ENCODE measurements at regions of chr1 and their contacts with region 1.

Region 1: GRCh38 chr1:151106894-151107293 is 36.3 kb downstream of the GABPB2 start:
- DNase-seq: no peak
- H3K4me3 ChIP-seq: no peak overlapping the region
- H3K27ac ChIP-seq: no peak overlapping the region
- H3K4me1 ChIP-seq: no peaks in the 10 kb centered on the region
- H3K27me3 ChIP-seq: no peaks in the 10 kb centered on the region
- CTCF ChIP-seq: no peak
- EP300 ChIP-seq: no peak
- POLR2A ChIP-seq: no peak
- RAD21 ChIP-seq: no peak

Region 2: GRCh38 chr1:150841626-150842025 is 265.3 kb before region 1 on chr1:
- CTCF ChIA-PET with region 1: no interaction called
- POLR2A ChIA-PET with region 1: no interaction called
- DNase-seq: no peak
- H3K4me3 ChIP-seq: no peak overlapping the region
- H3K27ac ChIP-seq: no peak overlapping the region
- H3K4me1 ChIP-seq: no peaks in the 10 kb centered on the region
- H3K27me3 ChIP-seq: no peaks in the 10 kb centered on the region
- CTCF ChIP-seq: no peak
- EP300 ChIP-seq: no peak
- POLR2A ChIP-seq: no peak
- RAD21 ChIP-seq: no peak

Region 3: DNA sequence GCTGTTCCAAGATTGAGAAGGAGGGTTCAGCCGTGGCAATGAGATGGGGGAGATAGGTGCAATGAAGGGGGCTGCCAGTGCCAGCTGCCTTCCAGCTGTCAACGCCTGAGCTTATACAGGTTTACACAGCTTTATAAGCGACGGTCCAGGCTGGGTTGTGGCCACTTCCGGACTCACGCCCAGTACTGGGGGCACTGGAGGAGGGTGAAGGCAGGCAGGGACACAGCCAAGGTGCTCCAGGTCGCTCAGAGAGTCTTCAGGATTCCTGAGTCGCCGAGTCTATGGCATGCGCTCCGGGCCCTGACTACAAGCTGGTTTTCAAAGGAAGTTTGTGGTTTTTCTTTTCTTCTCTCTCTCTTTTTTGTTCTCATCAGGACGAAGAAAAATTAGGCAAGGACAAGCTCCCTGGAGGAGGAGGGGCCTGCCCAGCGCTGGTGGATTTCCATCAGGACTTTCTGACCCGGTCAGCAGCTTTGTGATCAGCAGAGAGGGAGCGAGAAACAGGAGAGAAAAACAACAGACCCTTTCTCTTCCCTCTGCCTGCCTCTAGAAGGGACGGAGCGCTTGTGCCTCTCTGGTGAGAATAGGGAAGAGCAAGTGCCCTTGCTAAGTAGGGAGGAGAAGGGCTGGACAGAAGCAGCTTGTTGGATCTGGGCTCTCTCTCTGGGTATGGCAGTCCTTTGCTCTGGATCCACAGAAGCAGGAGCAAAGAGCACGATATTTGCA is 100.4 kb before region 1 on chr1 and contains the start of gene MINDY1:
- CTCF ChIA-PET with region 1: no interaction called
- POLR2A ChIA-PET with region 1: no interaction called
- DNase-seq: peak; percentile 33 to 67
- H3K4me3 ChIP-seq: peak within 1 kb of the TSS; percentile 6 to 94 (median 41); a peak in 7 of 8 replicates
- H3K27ac ChIP-seq: peak within 1 kb of the TSS; percentile 53
- H3K4me1 ChIP-seq: peaks cover 9 to 12% (median 9%) of the 10 kb centered on the region in 4 experiments; a peak in 6 of 7 replicates
- H3K27me3 ChIP-seq: no peaks in the 10 kb centered on the region
- CTCF ChIP-seq: peak; percentile 53 to 70 (median 62)
- EP300 ChIP-seq: no peak
- POLR2A ChIP-seq: peak; percentile 43 to 84
- RAD21 ChIP-seq: peak; percentile 59 to 66
- total RNA-seq, gene MINDY1: 10.6 and 11.4 TPM in 2 replicates

Region 4: GRCh38 chr1:151124763-151125403 is 18.0 kb after region 1 on chr1:
- CTCF ChIA-PET with region 1: interaction called, 21 read pairs
- POLR2A ChIA-PET with region 1: interaction called, 3 read pairs
- DNase-seq: no peak
- H3K4me3 ChIP-seq: no peak overlapping the region
- H3K27ac ChIP-seq: no peak overlapping the region
- H3K4me1 ChIP-seq: peaks cover 0 to 6% (median under 1%) of the 10 kb centered on the region in 4 experiments; a peak in 3 of 7 replicates
- H3K27me3 ChIP-seq: no peaks in the 10 kb centered on the region
- CTCF ChIP-seq: no peak
- EP300 ChIP-seq: no peak
- POLR2A ChIP-seq: no peak
- RAD21 ChIP-seq: no peak

Region 5: DNA sequence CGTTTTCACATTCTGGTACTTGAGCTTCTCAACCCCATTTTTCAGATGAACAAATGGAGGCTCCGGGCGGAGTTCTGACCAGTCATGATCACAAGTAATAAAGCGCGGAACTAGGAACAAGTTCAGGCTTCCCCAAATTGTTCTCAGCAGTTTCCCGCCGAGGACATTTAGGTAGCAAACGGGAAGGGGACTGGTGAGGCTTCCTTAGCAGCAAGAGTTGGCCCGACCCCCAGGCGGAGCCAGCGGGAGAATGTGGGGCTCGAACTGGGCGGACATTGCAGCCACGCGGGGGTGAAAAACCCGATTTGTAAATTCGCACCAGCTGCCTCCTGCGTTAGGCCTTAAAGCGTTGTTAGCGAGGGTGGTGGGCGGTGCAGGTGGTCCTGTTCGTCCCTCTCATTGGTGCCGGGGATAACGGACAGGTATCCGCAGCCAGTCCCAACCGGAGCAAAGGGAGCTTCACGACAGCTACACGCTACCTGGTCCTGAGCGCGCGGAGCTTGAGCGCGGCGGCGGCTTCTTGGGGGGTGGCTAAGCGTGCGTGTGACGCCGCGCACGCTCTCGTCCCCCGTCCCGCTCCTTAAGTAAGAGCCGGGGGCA is 24.2 kb after region 1 on chr1:
- CTCF ChIA-PET with region 1: interaction called, 27 read pairs
- POLR2A ChIA-PET with region 1: interaction called, 3 read pairs
- DNase-seq: peak; percentile 87 to 91
- H3K4me3 ChIP-seq: peak overlapping the region; percentile 37 to 64 (median 45); a peak in 7 of 8 replicates
- H3K27ac ChIP-seq: peak overlapping the region; percentile 42; the same call in 1 of the 2 replicates
- H3K4me1 ChIP-seq: peaks cover 0 to 12% (median 8%) of the 10 kb centered on the region in 4 experiments; a peak in 5 of 7 replicates
- H3K27me3 ChIP-seq: peaks cover 0 to 28% (median 20%) of the 10 kb centered on the region in 4 experiments; a peak in 5 of 7 replicates
- CTCF ChIP-seq: no peak
- EP300 ChIP-seq: no peak
- POLR2A ChIP-seq: peak in 1 of 2 experiments; percentile 67; a peak in 1 of 3 replicates
- RAD21 ChIP-seq: 0 out of 4 replicates have a peak, but pooled peaks of 1 of the 2 experiments have one; percentile 10